ENCODE measurements at regions of chr3 and their contacts with region 1.

Region 1: GRCh38 chr3:113495035-113495434 is 19.9 kb downstream of the SPICE1 start:
- DNase-seq: peak; percentile 67 to 72 (median 70)
- H3K4me3 ChIP-seq: no peak overlapping the region
- H3K27ac ChIP-seq: no peak overlapping the region
- H3K4me1 ChIP-seq: no peaks in the 10 kb centered on the region
- H3K27me3 ChIP-seq: no peaks in the 10 kb centered on the region

Region 2: GRCh38 chr3:113535898-113536297 is 40.9 kb after region 1 on chr3:
- CTCF ChIA-PET with region 1: interaction called, 13 read pairs
- POLR2A ChIA-PET with region 1: no interaction called
- DNase-seq: peak; percentile 26 to 50 (median 48)
- H3K4me3 ChIP-seq: no peak overlapping the region
- H3K27ac ChIP-seq: no peak overlapping the region
- H3K4me1 ChIP-seq: peaks cover 32 to 44% (median 37%) of the 10 kb centered on the region in 4 experiments
- H3K27me3 ChIP-seq: no peaks in the 10 kb centered on the region

Region 3: GRCh38 chr3:113560831-113561623 is 66.0 kb after region 1 on chr3:
- CTCF ChIA-PET with region 1: interaction called, 108 read pairs
- POLR2A ChIA-PET with region 1: no interaction called
- DNase-seq: peak; percentile 22 to 53 (median 51)
- H3K4me3 ChIP-seq: no peak overlapping the region
- H3K27ac ChIP-seq: peak overlapping the region in 1 of 2 experiments; percentile 33
- H3K4me1 ChIP-seq: peaks cover 0 to 12% (median 4%) of the 10 kb centered on the region in 4 experiments
- H3K27me3 ChIP-seq: no peaks in the 10 kb centered on the region

Region 4: DNA sequence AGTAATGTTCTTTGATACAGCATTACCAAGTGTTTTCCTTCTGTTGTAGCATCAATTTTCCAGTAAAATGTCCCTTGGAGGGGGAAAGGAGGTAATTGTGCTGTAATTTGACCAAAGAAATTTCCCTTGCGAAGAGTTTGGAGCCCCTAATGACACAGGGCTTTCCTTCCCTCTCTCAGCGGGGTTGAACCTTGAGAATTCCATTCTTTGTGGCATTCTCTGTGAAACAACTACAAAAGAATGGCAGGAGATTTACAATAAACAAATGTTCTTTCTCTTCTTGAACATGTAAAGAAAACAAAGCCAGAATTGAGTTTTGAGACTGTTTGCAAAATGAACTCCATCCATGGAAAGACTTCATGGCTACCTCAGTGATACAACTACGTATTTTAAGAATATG is 90.7 kb after region 1 on chr3:
- CTCF ChIA-PET with region 1: interaction called, 13 read pairs
- POLR2A ChIA-PET with region 1: no interaction called
- DNase-seq: no peak
- H3K4me3 ChIP-seq: no peak overlapping the region
- H3K27ac ChIP-seq: no peak overlapping the region
- H3K4me1 ChIP-seq: no peaks in the 10 kb centered on the region
- H3K27me3 ChIP-seq: no peaks in the 10 kb centered on the region

Measured in common myeloid progenitor, CD34-positive (primary cell).